Calu3 (cell line): ENCODE measurements at regions of chr15 and their contacts with region 1.

Region 1: DNA sequence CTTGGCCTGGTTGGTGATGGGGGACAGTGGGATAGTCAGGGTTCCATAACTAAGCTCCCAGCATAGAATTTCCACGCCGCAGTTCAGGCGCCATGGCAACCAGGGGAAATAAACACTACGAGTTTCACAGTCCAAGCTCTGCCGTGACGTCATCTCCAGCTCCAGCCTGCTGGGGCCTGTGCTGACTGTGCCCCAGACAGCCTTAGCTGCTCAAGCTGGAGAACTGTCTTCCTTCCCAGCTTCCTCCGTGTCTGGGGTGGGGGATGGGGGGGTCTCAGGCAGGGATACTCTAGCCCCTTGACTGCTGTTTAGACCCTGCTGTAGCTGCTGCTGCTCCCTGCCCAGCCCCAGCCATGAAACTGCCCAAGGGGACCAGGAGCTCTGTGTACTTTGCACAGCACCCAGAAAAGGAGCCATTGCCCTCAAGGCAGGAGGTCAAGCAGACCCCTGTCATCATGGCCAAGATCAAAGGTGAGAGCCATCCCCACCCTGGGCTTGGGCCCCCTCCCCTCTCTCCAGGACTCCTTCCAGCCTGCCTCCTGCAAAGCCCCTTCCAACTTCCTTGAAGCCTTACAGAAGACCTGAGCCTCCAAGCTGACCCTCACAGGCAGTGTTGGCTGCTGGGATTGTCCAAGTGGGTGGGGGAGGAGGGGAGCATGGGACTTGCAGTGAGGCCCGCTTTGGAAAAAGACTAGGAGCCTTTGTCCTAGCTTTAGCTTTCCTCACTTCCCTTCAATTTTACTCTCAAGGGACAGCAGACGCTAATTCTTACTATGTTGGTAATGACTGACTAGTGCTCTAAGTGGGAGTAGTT is 11.4 kb upstream of the CSPG4 start:
- DNase-seq: peak; percentile 84
- H3K4me3 Mint-ChIP-seq: no peak overlapping the region
- H3K27ac Mint-ChIP-seq: peak overlapping the region; percentile 31
- H3K4me1 Mint-ChIP-seq: peaks cover 18% of the 10 kb centered on the region
- H3K27me3 Mint-ChIP-seq: peaks cover 36% of the 10 kb centered on the region
- CTCF ChIP-seq: no peak

Region 2: GRCh38 chr15:75201609-75202250 is 522.3 kb before region 1 on chr15 and contains the start of gene C15orf39:
- CTCF ChIA-PET with region 1: no interaction called
- intact Hi-C with region 1: no loop called
- DNase-seq: peak; percentile 86
- H3K4me3 Mint-ChIP-seq: peak within 1 kb of the TSS; percentile 94
- H3K27ac Mint-ChIP-seq: peak within 1 kb of the TSS; percentile 79
- H3K4me1 Mint-ChIP-seq: peaks cover 54% of the 10 kb centered on the region
- H3K27me3 Mint-ChIP-seq: no peaks in the 10 kb centered on the region
- CTCF ChIP-seq: peak; percentile 92
- total RNA-seq, gene C15orf39: 77.2 and 86.5 TPM in 2 replicates

Region 3: GRCh38 chr15:75738647-75739331 is 14.7 kb after region 1 on chr15:
- CTCF ChIA-PET with region 1: interaction called, 10 read pairs
- intact Hi-C with region 1: no loop called
- DNase-seq: peak; percentile 97
- H3K4me3 Mint-ChIP-seq: peak overlapping the region; percentile 72
- H3K27ac Mint-ChIP-seq: no peak overlapping the region
- H3K4me1 Mint-ChIP-seq: no peaks in the 10 kb centered on the region
- H3K27me3 Mint-ChIP-seq: peaks cover 30% of the 10 kb centered on the region
- CTCF ChIP-seq: no peak

Region 4: GRCh38 chr15:75801859-75802593 is 78.0 kb after region 1 on chr15:
- CTCF ChIA-PET with region 1: interaction called, 29 read pairs
- intact Hi-C with region 1: loop called (anchors 1 kb)
- DNase-seq: peak; percentile 89
- H3K4me3 Mint-ChIP-seq: peak overlapping the region; percentile 41
- H3K27ac Mint-ChIP-seq: no peak overlapping the region
- H3K4me1 Mint-ChIP-seq: peaks cover 8% of the 10 kb centered on the region
- H3K27me3 Mint-ChIP-seq: peaks cover 93% of the 10 kb centered on the region
- CTCF ChIP-seq: peak; percentile 92

Region 5: GRCh38 chr15:75809986-75810750 is 86.1 kb after region 1 on chr15:
- CTCF ChIA-PET with region 1: interaction called, 11 read pairs
- intact Hi-C with region 1: loop called (anchors 1 kb)
- DNase-seq: peak; percentile 60
- H3K4me3 Mint-ChIP-seq: no peak overlapping the region
- H3K27ac Mint-ChIP-seq: no peak overlapping the region
- H3K4me1 Mint-ChIP-seq: no peaks in the 10 kb centered on the region
- H3K27me3 Mint-ChIP-seq: peaks cover 51% of the 10 kb centered on the region
- CTCF ChIP-seq: peak; percentile 46